ENCODE measurements at regions of chr4 and their contacts with region 1.

Region 1: GRCh38 chr4:169103966-169104447 is 94.0 kb upstream of the CBR4 start:
- DNase-seq: no peak
- H3K4me3 ChIP-seq: no peak overlapping the region
- CTCF ChIP-seq: no peak

Region 2: DNA sequence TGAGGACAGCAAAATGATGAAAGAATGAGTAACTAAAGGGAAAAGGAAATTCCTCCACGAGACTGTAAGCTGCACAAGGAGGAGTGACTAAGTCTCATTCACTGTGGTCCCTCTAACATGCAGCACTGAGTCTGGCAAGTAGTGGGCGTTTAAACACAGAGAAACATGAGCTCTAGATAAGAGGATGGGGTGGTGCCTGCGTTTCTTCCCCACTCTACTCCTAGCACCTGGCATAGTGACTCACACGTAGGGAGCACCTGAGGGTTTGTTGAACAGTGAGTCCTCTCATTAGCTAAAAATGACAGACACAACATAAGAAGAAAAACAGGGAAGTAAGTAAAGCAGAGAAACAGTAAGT is 11.9 kb after region 1 on chr4:
- CTCF ChIA-PET with region 1: interaction called, 15 read pairs
- POLR2A ChIA-PET with region 1: interaction called, 3 read pairs
- DNase-seq: peak; percentile 94
- H3K4me3 ChIP-seq: no peak overlapping the region
- CTCF ChIP-seq: peak; percentile 46